GM10248 (cell line): ENCODE measurements at regions of chr11 and their contacts with region 1.

Region 1: DNA sequence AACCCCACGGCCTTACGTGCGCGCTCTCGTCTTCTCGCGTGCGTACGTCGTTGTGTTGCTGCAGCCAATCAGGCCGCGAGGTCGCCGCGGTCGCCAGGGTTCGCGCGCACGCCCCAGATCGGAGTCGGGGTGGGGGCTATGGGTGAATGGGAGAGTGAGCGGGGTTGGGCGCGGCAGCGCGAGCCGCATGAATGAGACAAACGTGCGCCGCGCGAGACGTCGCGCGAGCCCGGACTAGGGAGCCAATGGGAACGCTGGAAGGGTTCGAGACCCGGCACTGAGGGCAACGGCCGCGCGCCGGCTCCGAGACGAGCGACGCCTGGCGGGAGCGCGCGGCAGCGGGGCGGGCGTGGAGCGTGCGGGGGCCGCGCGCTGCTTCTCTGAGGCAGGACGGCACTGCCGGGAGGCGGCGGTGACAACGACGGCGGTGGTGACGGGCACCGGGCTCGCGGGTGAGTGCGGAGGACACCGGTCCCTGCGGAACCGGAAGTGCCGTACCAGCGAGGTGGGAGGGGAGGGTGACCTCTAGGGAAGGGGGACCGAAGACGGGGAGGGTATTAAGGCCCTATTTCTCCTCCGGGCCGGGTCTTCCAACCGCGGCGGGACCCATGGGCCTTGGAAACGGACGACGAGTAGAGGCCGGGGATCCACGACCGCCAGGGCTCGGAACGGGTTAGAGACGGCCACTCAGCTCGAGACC is at the start of gene ZDHHC5:
- DNase-seq: peak; percentile 97
- CTCF ChIP-seq: peak; percentile 41

Region 2: GRCh38 chr11:57546869-57547475 is 120.9 kb before region 1 on chr11:
- CTCF ChIA-PET with region 1: no interaction called
- POLR2A ChIA-PET with region 1: no interaction called
- DNase-seq: peak; percentile 73
- CTCF ChIP-seq: no peak

Region 3: DNA sequence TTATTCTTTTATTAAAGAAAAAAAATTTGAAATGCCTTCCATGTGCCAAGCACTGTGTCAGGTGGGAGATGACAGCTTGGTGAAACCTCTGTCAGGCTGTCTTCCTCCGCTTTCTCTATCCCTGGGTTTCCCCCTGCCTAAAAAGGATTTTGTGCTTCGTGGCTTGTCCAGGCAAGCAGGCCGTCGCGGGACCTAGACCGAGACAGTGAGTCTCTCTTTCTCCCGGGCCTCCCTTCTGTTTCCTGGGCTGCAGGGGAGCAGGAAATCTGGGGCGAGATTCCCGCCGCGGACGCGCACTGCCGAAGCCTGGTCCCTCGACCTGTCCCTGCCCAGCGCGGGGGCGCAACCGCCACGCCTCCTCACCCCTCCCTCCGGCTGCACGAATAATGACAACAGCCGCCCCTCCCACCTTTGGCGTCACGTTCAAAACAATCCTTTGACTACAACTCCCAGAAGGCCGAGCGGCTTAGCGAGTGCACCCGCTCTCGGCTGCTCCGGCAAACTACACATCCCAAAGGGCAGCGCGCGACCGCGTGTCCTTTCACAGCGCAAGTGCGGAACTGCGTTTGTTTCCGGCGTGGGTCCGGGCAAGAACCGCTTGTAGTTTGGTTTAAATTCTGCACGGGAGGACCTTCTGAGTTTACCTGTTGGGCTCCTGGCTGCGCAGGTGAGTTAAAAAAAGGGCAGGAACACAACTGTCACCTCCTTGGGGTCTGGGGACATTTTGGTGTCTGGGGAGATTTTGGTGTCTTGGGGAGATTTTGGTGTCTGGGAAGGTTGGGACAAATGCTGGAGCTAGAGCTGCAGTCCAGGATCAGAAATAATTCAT is 10.5 kb before region 1 on chr11 and contains the start of gene CLP1:
- CTCF ChIA-PET with region 1: no interaction called
- POLR2A ChIA-PET with region 1: interaction called, 10 read pairs
- DNase-seq: peak; percentile 96
- CTCF ChIP-seq: no peak